ENCODE measurements at regions of chr20 and their contacts with region 1.

Region 1: DNA sequence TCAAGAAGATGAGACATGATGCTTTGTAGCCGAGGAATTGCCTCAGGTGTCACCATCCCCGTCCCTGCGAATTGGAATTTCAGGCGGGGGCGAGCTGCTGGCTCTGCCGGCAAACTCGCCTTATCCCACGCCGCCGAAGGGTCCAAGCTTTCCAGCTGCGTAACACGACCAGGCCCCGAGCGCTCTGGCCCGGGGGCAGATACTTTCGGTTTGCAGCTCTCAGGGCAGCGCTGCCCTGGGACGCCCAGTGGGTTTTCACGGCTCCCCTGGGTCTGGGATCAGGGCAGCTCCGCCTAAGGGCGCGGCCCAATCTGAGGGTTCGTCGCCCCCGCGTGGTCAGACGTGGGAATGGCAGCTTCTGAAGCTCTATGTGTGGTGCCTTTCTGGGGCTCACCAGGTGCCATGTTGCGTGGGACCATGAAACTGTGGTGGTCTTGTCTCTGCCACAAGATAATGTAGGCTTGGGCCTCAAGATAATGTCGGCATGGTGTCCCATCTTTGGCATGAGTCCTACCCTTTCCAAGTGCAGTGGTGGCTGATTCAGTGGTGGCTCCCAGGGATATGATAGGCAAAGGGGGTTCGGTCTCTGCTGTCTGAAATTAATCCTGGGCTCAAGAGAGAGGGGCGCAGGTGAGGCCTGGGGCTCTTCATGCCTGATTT is 20.9 kb downstream of the PIGT start:
- DNase-seq: peak; percentile 85
- H3K4me3 ChIP-seq: peak overlapping the region; percentile 42 to 71 (median 52)
- H3K27ac ChIP-seq: no peak overlapping the region
- H3K4me1 ChIP-seq: peaks cover 6% of the 10 kb centered on the region
- H3K27me3 ChIP-seq: no peaks in the 10 kb centered on the region
- CTCF ChIP-seq: peak; percentile 92 to 96
- POLR2A ChIP-seq: no peak

Region 2: DNA sequence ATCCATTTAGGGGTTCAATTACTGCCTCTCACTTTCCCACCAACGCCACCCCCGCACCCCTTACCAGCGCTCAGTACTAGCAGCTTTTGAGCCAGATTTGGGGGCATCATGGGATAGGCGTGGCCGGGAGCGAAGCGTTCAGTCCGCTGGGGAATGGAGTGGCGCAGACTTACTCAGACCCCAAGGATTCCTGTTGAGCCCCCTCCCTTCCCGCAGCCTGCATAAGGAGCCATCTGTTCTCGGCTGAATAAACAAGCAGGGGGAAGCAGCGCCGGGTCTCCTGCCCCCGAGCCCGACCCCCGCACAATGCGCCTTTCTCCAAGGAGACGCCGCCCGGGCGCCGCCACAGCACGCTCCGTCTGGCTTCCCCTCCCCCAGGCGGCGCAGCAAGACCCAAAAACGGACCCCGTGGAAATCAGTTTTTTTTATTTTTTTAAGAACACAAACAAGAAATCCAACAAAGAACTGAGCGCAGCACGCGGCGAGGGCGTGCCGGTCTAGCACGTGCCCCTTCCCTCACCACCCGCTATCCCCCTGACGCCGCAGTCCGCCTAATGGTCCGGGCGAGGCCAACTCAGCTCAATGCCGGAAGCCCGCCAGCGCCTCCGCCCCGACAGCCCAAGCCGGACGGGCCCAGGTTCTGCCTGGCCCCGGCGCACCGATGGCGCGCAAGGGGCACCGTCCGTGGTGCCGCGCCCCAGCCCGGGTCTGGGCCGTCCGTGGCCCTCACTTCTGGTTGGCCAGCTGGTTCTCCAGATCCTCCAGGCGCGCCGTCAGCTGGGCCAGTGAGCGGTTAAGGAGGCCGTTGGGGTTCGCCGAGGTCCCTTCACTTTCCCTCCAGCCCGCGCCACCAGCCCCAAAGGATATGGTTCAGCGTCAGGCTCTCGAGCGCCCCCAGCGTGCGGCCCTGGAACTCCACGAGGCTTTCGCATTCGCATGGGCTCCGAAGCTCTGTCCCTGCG is 143.5 kb before region 1 on chr20:
- CTCF ChIA-PET with region 1: interaction called, 20 read pairs
- POLR2A ChIA-PET with region 1: no interaction called
- dilution Hi-C with region 1: no loop called
- intact Hi-C with region 1: no loop called
- DNase-seq: peak; percentile 76
- H3K4me3 ChIP-seq: peak overlapping the region; percentile 33 to 51 (median 47)
- H3K27ac ChIP-seq: peak overlapping the region; percentile 37
- H3K4me1 ChIP-seq: peaks cover 9% of the 10 kb centered on the region
- H3K27me3 ChIP-seq: peaks cover 0 to 8% of the 10 kb centered on the region in 2 experiments
- CTCF ChIP-seq: peak; percentile 95 to 99
- POLR2A ChIP-seq: no peak

Region 3: DNA sequence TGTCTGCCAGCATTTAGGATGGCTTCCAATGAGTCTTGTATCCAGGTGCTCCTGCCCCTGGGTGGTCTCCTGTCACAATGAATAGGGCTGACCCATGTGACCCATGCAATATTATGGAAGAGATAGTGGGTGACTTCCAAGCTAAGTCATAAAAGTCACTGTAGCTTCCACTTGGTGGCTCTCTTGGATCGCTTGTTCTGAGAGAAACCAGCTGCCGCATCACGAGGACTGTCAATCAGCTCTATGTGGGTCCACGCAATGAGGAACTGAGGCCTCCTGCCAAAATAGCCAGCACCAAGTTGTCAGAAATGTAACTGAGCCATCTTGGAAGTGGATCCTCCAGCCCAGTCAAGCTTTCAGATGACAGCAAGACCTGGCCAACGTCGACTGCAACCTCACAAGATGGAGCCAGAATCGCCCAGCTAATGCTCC is 113.9 kb before region 1 on chr20:
- CTCF ChIA-PET with region 1: interaction called, 389 read pairs
- POLR2A ChIA-PET with region 1: no interaction called
- dilution Hi-C with region 1: no loop called
- intact Hi-C with region 1: loop called (anchors 1 kb)
- DNase-seq: peak; percentile 41
- H3K4me3 ChIP-seq: no peak overlapping the region
- H3K27ac ChIP-seq: no peak overlapping the region
- H3K4me1 ChIP-seq: no peaks in the 10 kb centered on the region
- H3K27me3 ChIP-seq: peaks cover 2% of the 10 kb centered on the region in 2 experiments
- CTCF ChIP-seq: peak in 1 of 2 donors; percentile 15
- POLR2A ChIP-seq: no peak

Region 4: GRCh38 chr20:45362804-45363610 is 73.9 kb before region 1 on chr20 and contains the start of gene SYS1:
- CTCF ChIA-PET with region 1: interaction called, 111 read pairs
- POLR2A ChIA-PET with region 1: interaction called, 6 read pairs
- dilution Hi-C with region 1: no loop called
- intact Hi-C with region 1: loop called (anchors 1 kb)
- DNase-seq: peak; percentile 99
- H3K4me3 ChIP-seq: peak within 1 kb of the TSS; percentile 34 to 56 (median 52)
- H3K27ac ChIP-seq: peak within 1 kb of the TSS; percentile 83
- H3K4me1 ChIP-seq: peaks cover 35% of the 10 kb centered on the region
- H3K27me3 ChIP-seq: no peaks in the 10 kb centered on the region
- CTCF ChIP-seq: peak; percentile 77 to 88
- POLR2A ChIP-seq: peak; percentile 88
- total RNA-seq, gene SYS1: 22.3 and 27.4 TPM in 2 replicates

Region 5: DNA sequence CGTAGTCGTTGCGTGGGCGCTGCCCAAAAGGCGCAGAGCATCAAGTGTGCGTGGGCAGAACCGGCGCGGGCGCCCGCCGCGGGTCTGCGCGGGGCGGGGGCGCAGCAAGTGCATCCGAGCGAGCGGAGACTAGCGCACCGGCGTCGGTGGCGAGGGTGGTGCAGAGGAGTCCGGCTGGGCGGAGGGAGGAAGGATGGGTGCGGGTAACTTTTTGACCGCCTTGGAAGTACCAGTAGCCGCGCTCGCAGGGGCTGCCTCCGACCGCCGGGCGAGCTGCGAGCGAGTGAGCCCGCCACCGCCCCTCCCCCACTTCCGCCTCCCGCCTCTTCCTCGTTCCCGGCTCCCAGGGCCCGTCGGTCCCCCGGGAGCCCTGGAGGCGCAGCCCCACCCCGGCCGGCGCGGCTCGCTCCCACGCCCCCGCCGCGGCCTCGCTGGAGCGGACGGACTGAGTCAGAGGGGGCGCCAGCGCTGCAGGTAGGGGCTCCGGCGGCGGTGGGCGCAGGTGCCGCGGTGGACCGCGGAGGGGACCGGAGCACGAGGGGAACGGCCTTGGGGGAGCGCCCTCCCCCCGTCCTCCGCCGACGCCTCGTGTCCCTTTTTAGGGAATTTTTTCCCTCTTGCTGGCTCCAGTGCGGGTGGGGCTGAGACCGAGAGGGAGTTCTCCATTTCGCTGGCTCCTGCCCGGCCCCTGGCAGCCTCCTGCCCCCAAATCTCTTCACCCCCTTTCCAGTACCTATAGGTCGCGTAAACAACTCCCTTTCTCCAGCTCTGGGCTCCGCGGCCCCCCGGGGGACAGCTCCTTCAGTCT is 30.4 kb before region 1 on chr20:
- CTCF ChIA-PET with region 1: interaction called, 23 read pairs
- POLR2A ChIA-PET with region 1: no interaction called
- dilution Hi-C with region 1: no loop called
- intact Hi-C with region 1: no loop called
- DNase-seq: peak; percentile 35
- H3K4me3 ChIP-seq: peak overlapping the region; percentile 7 to 85 (median 36)
- H3K27ac ChIP-seq: no peak overlapping the region
- H3K4me1 ChIP-seq: peaks cover 3% of the 10 kb centered on the region
- H3K27me3 ChIP-seq: peaks cover 6% of the 10 kb centered on the region in 2 experiments
- CTCF ChIP-seq: no peak
- POLR2A ChIP-seq: no peak

Region 6: DNA sequence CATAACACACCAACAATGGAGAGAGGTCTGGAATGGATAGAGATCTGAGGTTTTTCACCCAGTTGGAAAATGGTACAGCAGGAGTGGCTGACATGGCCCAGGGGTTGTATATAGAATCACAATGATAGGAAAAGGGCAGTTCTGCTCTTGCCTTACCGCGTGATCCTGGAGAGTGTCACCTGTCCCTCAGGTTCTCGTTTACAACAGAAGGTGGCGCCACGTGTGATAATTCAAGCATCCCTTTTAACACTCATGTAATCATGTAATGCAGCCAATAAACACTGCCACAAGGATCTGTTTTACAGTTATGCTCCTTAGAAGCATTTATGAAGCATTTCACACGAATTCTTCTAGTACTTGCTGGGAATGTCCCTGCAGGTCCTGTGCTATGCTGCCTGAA is 19.8 kb after region 1 on chr20:
- CTCF ChIA-PET with region 1: interaction called, 21 read pairs
- POLR2A ChIA-PET with region 1: no interaction called
- dilution Hi-C with region 1: no loop called
- intact Hi-C with region 1: no loop called
- DNase-seq: peak; percentile 28
- H3K4me3 ChIP-seq: no peak overlapping the region
- H3K27ac ChIP-seq: no peak overlapping the region
- H3K4me1 ChIP-seq: no peaks in the 10 kb centered on the region
- H3K27me3 ChIP-seq: peaks cover 9 to 14% of the 10 kb centered on the region in 2 experiments
- CTCF ChIP-seq: peak in 1 of 2 donors; percentile 33
- POLR2A ChIP-seq: no peak